MCF 10A (cell line): ENCODE measurements at regions of chr16 and their contacts with region 1.

Region 1: DNA sequence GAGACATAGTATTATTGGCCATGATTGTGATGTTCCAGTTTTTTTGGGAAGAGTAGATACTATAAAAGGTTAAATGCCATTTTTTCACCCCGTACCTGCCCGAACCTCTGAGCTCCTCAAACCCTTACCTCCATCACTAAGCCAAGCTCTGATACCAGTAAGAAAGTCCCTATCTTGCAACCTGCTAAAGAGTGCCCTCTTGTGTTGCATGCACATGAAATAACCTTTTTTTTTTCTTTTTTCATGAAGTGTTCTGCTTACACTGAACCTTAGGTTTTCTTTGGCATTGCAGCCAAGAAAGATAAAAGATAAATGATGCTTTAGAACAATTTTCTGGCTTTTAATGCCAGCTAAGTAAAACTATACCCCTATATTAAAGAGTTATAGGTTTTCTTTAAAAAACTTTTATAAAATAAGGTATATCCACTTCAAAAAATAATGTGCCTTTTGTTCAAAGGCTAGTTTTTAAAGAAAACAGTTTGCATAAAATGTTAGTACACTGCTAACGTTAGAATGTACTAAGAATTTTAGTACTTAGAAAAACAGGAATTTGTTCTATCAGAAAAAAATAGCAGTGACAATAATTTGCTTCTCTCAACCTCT is 295.3 kb upstream of the PMFBP1 start:
- DNase-seq: peak; percentile 61
- H3K4me3 Mint-ChIP-seq: no peak overlapping the region
- H3K27ac Mint-ChIP-seq: no peak overlapping the region
- H3K4me1 Mint-ChIP-seq: no peaks in the 10 kb centered on the region
- H3K27me3 Mint-ChIP-seq: no peaks in the 10 kb centered on the region
- CTCF ChIP-seq: peak; percentile 73

Region 2: GRCh38 chr16:71961066-71962039 is 505.9 kb before region 1 on chr16:
- CTCF ChIA-PET with region 1: no interaction called
- POLR2A ChIA-PET with region 1: no interaction called
- intact Hi-C with region 1: no loop called
- DNase-seq: peak; percentile 89
- H3K4me3 Mint-ChIP-seq: no peak overlapping the region
- H3K27ac Mint-ChIP-seq: no peak overlapping the region
- H3K4me1 Mint-ChIP-seq: no peaks in the 10 kb centered on the region
- H3K27me3 Mint-ChIP-seq: peaks cover 13% of the 10 kb centered on the region
- CTCF ChIP-seq: peak; percentile 76

Region 3: GRCh38 chr16:72129976-72130865 is 337.0 kb before region 1 on chr16:
- CTCF ChIA-PET with region 1: interaction called, 98 read pairs
- POLR2A ChIA-PET with region 1: no interaction called
- intact Hi-C with region 1: loop called (anchors 1 kb)
- DNase-seq: no peak
- H3K4me3 Mint-ChIP-seq: no peak overlapping the region
- H3K27ac Mint-ChIP-seq: no peak overlapping the region
- H3K4me1 Mint-ChIP-seq: peaks cover 6% of the 10 kb centered on the region
- H3K27me3 Mint-ChIP-seq: no peaks in the 10 kb centered on the region
- CTCF ChIP-seq: no peak

Region 4: DNA sequence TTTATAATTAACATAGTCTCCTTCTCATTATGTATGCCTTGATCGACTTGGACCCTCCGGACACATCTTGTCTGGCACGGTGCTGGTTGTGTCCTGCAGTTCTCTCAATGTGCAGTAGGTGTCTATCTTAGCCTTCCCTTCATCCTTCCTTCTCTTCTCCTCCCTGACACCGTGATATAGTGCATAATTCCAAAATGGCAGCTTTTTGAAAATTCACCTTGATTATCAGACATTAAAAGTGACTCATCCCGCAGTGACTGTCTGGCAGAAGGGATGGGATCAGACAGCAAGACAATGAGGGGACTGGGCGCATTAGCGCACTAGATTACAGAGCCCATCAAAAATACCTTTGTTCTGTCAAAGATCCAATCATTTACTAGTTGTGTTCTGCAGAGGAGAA is 225.3 kb before region 1 on chr16:
- CTCF ChIA-PET with region 1: interaction called, 90 read pairs
- POLR2A ChIA-PET with region 1: interaction called, 9 read pairs
- intact Hi-C with region 1: loop called (anchors 1 kb)
- DNase-seq: peak; percentile 68
- H3K4me3 Mint-ChIP-seq: no peak overlapping the region
- H3K27ac Mint-ChIP-seq: no peak overlapping the region
- H3K4me1 Mint-ChIP-seq: peaks cover 3% of the 10 kb centered on the region
- H3K27me3 Mint-ChIP-seq: no peaks in the 10 kb centered on the region
- CTCF ChIP-seq: peak; percentile 76

Region 5: GRCh38 chr16:72400257-72400882 is 66.9 kb before region 1 on chr16:
- CTCF ChIA-PET with region 1: interaction called, 25 read pairs
- POLR2A ChIA-PET with region 1: no interaction called
- intact Hi-C with region 1: no loop called
- DNase-seq: peak; percentile 59
- H3K4me3 Mint-ChIP-seq: no peak overlapping the region
- H3K27ac Mint-ChIP-seq: peak overlapping the region; percentile 0
- H3K4me1 Mint-ChIP-seq: no peaks in the 10 kb centered on the region
- H3K27me3 Mint-ChIP-seq: no peaks in the 10 kb centered on the region
- CTCF ChIP-seq: peak; percentile 79

Region 6: GRCh38 chr16:72455743-72456659 is 11.3 kb before region 1 on chr16:
- CTCF ChIA-PET with region 1: interaction called, 13 read pairs
- POLR2A ChIA-PET with region 1: no interaction called
- intact Hi-C with region 1: no loop called
- DNase-seq: peak; percentile 10
- H3K4me3 Mint-ChIP-seq: no peak overlapping the region
- H3K27ac Mint-ChIP-seq: no peak overlapping the region
- H3K4me1 Mint-ChIP-seq: no peaks in the 10 kb centered on the region
- H3K27me3 Mint-ChIP-seq: no peaks in the 10 kb centered on the region
- CTCF ChIP-seq: no peak